ENCODE measurements at regions of chrX and their contacts with region 1.

Region 1: GRCh38 chrX:119617517-119618164 is 11.4 kb upstream of the NKRF start:
- DNase-seq: no peak
- H3K4me3 Mint-ChIP-seq: no peak overlapping the region
- H3K27ac Mint-ChIP-seq: no peak overlapping the region
- H3K4me1 Mint-ChIP-seq: no peaks in the 10 kb centered on the region
- H3K27me3 Mint-ChIP-seq: peaks cover 17% of the 10 kb centered on the region
- CTCF ChIP-seq: no peak

Region 2: DNA sequence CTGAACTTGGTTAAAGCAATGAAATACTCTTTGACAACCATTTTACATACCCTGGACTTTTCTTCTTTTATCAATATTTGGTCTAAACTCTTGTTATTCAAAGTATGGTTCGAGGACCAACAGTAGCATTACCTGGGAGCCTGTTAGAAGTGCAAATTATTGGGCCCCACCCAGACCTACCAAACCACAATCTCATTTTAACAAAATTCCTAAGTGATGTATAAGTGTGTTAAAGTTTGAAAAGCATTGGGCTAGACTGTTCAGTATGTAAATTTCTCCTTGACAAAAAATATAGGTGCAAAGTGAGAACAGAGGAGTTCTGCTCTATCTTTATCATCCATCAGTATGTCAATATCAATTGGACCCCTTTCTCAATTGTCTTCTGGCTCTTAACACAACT is 314.5 kb before region 1 on chrX:
- CTCF ChIA-PET with region 1: no interaction called
- POLR2A ChIA-PET with region 1: no interaction called
- intact Hi-C with region 1: no loop called
- DNase-seq: no peak
- H3K4me3 Mint-ChIP-seq: no peak overlapping the region
- H3K27ac Mint-ChIP-seq: no peak overlapping the region
- H3K4me1 Mint-ChIP-seq: no peaks in the 10 kb centered on the region
- H3K27me3 Mint-ChIP-seq: peaks cover 32% of the 10 kb centered on the region
- CTCF ChIP-seq: no peak

Region 3: DNA sequence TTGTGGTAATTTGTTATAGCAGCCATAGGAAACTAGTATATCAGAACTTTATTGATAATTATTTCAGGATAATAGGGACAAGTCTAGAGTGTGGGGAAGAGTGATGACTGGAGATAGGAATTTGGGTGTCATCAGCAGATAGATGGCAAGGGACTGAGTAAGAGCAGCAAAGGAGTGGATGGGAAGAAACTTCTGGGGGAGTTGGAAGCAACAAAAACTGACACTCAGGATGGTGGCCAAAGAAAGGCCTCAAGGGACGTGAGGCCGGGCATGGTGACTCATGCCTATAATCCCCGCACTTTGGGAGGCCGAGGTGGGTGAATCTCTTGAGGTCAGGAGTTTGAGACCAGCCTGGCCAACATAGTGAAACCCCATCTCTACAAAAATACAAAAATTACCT is 158.5 kb before region 1 on chrX:
- CTCF ChIA-PET with region 1: no interaction called
- POLR2A ChIA-PET with region 1: no interaction called
- intact Hi-C with region 1: no loop called
- DNase-seq: no peak
- H3K4me3 Mint-ChIP-seq: no peak overlapping the region
- H3K27ac Mint-ChIP-seq: peak overlapping the region; percentile 25
- H3K4me1 Mint-ChIP-seq: peaks cover 11% of the 10 kb centered on the region
- H3K27me3 Mint-ChIP-seq: no peaks in the 10 kb centered on the region
- CTCF ChIP-seq: no peak

Region 4: DNA sequence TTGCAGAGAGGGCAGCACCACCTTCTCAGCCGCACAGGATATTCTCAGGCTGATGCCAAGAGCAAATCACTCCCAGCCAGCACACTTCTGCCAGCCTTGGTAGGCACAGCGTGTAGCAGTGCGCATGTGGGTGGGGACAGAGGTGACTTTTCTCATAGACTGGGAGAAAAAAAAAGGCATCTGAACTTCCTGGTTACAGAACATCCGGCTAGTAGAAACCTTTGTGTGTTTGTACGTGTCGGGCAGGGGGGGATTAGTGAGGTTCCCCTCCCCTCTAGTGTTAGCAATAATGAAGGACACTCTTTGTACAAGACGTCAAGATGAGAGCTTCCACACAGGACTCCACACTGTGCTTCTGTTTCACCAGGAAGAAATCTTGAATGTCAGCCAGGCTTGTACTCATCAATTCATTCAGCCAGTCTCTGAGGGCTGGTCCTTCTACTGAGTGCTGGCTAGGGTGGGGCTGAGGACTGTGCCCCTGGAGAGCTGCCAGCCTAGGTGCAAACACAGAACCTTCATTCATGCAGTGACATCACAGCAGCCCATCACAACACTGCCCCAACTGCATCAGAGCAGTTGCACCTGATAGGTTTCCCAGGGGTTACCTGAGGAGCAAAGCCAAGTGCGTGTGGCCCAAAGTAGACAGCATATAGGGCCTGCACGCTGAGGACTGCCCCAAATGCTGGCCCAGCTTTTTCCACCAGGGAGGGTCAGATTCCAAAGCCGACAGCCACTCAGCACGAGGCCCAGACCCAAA is 114.7 kb before region 1 on chrX:
- CTCF ChIA-PET with region 1: no interaction called
- POLR2A ChIA-PET with region 1: no interaction called
- intact Hi-C with region 1: no loop called
- DNase-seq: peak; percentile 79
- H3K4me3 Mint-ChIP-seq: no peak overlapping the region
- H3K27ac Mint-ChIP-seq: peak overlapping the region; percentile 3
- H3K4me1 Mint-ChIP-seq: peaks cover 22% of the 10 kb centered on the region
- H3K27me3 Mint-ChIP-seq: no peaks in the 10 kb centered on the region
- CTCF ChIP-seq: no peak

Region 5: DNA sequence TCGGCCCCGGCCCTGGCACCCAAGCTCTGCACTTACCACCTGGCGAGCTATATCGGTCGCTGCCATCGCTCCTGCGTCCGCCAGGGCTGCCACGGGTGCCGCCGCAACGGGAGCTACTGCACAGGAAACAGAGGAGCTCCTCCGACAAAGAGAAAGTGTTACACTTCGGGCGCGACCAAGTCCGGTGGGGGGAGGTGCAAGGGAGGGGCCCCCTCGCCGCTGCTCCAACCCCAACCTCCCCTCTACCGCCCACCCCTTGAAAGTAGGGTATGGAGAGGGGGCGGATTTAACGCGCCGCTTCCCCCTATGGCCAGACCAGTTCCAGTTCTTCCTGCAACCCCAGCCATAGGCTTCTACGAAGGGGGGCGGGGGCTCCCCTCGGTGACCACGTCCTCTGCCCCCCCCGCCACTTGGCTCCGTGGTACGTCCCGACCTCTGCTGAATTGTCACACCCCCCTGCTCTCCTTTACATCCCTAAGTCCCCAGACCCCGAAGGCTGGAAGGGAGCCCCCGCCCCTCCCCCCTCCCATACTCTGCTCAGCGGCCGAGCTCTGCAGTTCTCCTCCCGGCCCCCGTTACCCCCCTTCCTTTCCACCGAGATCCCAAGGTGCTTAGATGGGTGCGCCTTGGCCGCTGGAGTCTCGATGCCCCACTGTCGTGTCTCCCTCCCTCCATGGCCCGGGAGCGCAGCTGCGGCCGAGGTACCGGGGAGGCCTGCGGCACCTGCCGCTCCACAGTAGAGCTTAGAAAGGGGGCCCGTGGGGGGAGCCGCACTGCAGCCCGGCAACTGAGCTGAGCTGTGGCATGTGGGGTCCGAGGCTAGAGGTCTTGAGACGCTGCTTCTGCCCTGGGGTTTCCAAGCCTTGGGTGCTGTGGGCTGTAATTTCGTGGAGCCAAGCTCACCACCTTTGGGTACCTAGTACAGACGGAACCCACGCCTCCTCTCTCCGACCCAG is 75.7 kb after region 1 on chrX and contains the start of gene SEPTIN6:
- CTCF ChIA-PET with region 1: no interaction called
- POLR2A ChIA-PET with region 1: no interaction called
- intact Hi-C with region 1: loop called (anchors 10 kb)
- DNase-seq: peak; percentile 54
- H3K4me3 Mint-ChIP-seq: peak within 1 kb of the TSS; percentile 77
- H3K27ac Mint-ChIP-seq: no peak within 1 kb of the TSS
- H3K4me1 Mint-ChIP-seq: no peaks in the 10 kb centered on the region
- H3K27me3 Mint-ChIP-seq: peaks cover 15% of the 10 kb centered on the region
- CTCF ChIP-seq: no peak
- total RNA-seq, gene SEPTIN6: 3.8 and 4.7 TPM in 2 replicates

Region 6: GRCh38 chrX:120522820-120523219 is 905.2 kb after region 1 on chrX:
- CTCF ChIA-PET with region 1: no interaction called
- POLR2A ChIA-PET with region 1: no interaction called
- intact Hi-C with region 1: no loop called
- DNase-seq: no peak
- H3K4me3 Mint-ChIP-seq: no peak overlapping the region
- H3K27ac Mint-ChIP-seq: no peak overlapping the region
- H3K4me1 Mint-ChIP-seq: peaks cover 3% of the 10 kb centered on the region
- H3K27me3 Mint-ChIP-seq: peaks cover 19% of the 10 kb centered on the region
- CTCF ChIP-seq: no peak